ENCODE measurements at regions of chr6 and their contacts with region 1.

Region 1: DNA sequence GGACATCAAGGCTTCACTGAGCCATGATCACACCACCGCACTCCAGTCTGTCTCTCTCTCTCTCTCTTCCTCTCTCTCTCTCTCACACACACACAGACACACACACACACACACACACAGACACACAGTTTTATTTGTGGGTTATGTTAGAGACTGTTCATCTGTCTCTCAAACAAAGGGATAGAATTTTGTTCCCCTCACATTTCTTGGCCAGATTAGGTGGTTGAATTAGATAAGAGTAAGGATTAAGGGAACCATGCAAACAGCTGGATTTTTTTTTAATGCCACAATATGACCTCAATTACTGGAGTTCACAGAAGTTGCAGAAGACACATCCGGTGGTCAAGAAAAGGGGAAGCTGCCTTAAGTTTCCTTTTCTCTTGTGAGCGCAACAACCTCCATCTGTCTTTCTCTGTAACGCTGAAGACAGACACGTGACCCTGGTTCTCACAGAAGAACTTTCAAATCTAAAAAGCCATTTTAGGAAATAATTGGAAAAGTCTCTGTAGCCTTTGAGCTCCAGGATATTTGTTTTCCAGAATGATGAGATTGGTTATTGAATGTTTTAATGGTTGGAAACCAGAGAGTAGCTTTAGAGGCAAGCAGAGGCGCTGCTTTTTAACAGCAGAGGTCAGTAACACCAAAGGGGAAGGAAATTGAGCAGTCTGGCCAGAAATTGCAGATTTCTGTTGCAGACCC is 33.0 kb upstream of the LGSN start:
- DNase-seq: peak; percentile 50 to 62
- H3K4me3 ChIP-seq: no peak overlapping the region
- H3K4me3 Mint-ChIP-seq: no peak overlapping the region
- H3K27ac Mint-ChIP-seq: no peak overlapping the region
- H3K4me1 ChIP-seq: peaks cover 37% of the 10 kb centered on the region
- H3K4me1 Mint-ChIP-seq: peaks cover 32% of the 10 kb centered on the region
- H3K27me3 ChIP-seq: no peaks in the 10 kb centered on the region
- H3K27me3 Mint-ChIP-seq: no peaks in the 10 kb centered on the region
- CTCF ChIP-seq: peak; percentile 44 to 73

Region 2: GRCh38 chr6:63391203-63391970 is 38.7 kb after region 1 on chr6:
- CTCF ChIA-PET with region 1: interaction called, 9 read pairs
- POLR2A ChIA-PET with region 1: interaction called, 3 read pairs
- intact Hi-C with region 1: loop called (anchors 1 kb)
- DNase-seq: peak; percentile 82 to 83
- H3K4me3 ChIP-seq: no peak overlapping the region
- H3K4me3 Mint-ChIP-seq: peak overlapping the region; percentile 67
- H3K27ac Mint-ChIP-seq: peak overlapping the region; percentile 73
- H3K4me1 ChIP-seq: peaks cover 44% of the 10 kb centered on the region
- H3K4me1 Mint-ChIP-seq: peaks cover 31% of the 10 kb centered on the region
- H3K27me3 ChIP-seq: no peaks in the 10 kb centered on the region
- H3K27me3 Mint-ChIP-seq: no peaks in the 10 kb centered on the region
- CTCF ChIP-seq: no peak

Region 3: DNA sequence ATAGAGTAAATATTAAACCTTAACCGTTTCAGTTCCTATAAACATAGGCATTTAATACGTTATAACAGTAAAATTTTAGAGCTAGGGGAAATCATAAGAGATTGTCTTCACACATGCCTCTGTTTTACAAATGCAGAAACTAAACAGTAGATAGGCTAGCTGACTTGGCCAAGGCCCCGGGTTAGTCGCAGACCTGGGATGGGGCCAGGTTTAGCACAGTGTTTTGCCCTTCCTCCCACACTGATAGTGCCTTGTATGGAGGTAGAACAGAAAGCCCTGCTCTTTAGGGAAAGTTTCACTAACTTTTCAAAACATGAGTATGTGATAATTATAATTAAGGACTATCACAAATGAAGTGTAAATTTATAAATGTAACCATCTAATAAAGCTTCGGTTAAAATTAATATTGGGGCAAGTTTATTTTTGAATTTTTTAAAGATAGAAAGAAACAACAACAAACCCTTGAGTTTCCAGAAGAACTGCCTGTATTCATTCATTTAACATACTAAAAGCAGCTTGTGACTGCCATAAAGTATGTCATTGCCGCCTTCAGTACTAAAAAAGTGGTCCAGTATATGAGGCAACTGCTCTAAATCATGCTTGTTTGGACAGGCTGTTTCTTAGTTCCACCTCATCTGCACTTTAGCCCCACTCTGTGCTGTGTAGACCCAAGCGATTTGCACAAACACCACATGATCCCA is 157.1 kb after region 1 on chr6:
- CTCF ChIA-PET with region 1: no interaction called
- POLR2A ChIA-PET with region 1: no interaction called
- intact Hi-C with region 1: loop called (anchors 5 kb)
- DNase-seq: peak; percentile 72 to 78
- H3K4me3 ChIP-seq: no peak overlapping the region
- H3K4me3 Mint-ChIP-seq: no peak overlapping the region
- H3K27ac Mint-ChIP-seq: no peak overlapping the region
- H3K4me1 ChIP-seq: peaks cover 33% of the 10 kb centered on the region
- H3K4me1 Mint-ChIP-seq: peaks cover 6% of the 10 kb centered on the region
- H3K27me3 ChIP-seq: no peaks in the 10 kb centered on the region
- H3K27me3 Mint-ChIP-seq: no peaks in the 10 kb centered on the region
- CTCF ChIP-seq: no peak

Region 4: GRCh38 chr6:63553208-63553607 is 200.5 kb after region 1 on chr6:
- CTCF ChIA-PET with region 1: no interaction called
- POLR2A ChIA-PET with region 1: no interaction called
- intact Hi-C with region 1: no loop called
- DNase-seq: no peak
- H3K4me3 ChIP-seq: no peak overlapping the region
- H3K4me3 Mint-ChIP-seq: no peak overlapping the region
- H3K27ac Mint-ChIP-seq: no peak overlapping the region
- H3K4me1 ChIP-seq: peaks cover 9% of the 10 kb centered on the region; the same call in 1 of the 2 replicates
- H3K4me1 Mint-ChIP-seq: peaks cover 11% of the 10 kb centered on the region
- H3K27me3 ChIP-seq: no peaks in the 10 kb centered on the region
- H3K27me3 Mint-ChIP-seq: no peaks in the 10 kb centered on the region
- CTCF ChIP-seq: no peak

Region 5: GRCh38 chr6:63571881-63572732 is 219.4 kb after region 1 on chr6 and contains the starts of genes LOC128125822 and PTP4A1:
- CTCF ChIA-PET with region 1: interaction called, 7 read pairs
- POLR2A ChIA-PET with region 1: no interaction called
- intact Hi-C with region 1: loop called (anchors 1 kb)
- DNase-seq: peak; percentile 96 to 98
- H3K4me3 ChIP-seq: peak within 1 kb of the TSS; percentile 98
- H3K4me3 Mint-ChIP-seq: peak within 1 kb of the TSS; percentile 88
- H3K27ac Mint-ChIP-seq: peak within 1 kb of the TSS; percentile 94
- H3K4me1 ChIP-seq: peaks cover 29% of the 10 kb centered on the region
- H3K4me1 Mint-ChIP-seq: peaks cover 8% of the 10 kb centered on the region
- H3K27me3 ChIP-seq: no peaks in the 10 kb centered on the region
- H3K27me3 Mint-ChIP-seq: no peaks in the 10 kb centered on the region
- CTCF ChIP-seq: no peak
- total RNA-seq, gene PTP4A1: 122 and 129 TPM in 2 replicates

Region 6: DNA sequence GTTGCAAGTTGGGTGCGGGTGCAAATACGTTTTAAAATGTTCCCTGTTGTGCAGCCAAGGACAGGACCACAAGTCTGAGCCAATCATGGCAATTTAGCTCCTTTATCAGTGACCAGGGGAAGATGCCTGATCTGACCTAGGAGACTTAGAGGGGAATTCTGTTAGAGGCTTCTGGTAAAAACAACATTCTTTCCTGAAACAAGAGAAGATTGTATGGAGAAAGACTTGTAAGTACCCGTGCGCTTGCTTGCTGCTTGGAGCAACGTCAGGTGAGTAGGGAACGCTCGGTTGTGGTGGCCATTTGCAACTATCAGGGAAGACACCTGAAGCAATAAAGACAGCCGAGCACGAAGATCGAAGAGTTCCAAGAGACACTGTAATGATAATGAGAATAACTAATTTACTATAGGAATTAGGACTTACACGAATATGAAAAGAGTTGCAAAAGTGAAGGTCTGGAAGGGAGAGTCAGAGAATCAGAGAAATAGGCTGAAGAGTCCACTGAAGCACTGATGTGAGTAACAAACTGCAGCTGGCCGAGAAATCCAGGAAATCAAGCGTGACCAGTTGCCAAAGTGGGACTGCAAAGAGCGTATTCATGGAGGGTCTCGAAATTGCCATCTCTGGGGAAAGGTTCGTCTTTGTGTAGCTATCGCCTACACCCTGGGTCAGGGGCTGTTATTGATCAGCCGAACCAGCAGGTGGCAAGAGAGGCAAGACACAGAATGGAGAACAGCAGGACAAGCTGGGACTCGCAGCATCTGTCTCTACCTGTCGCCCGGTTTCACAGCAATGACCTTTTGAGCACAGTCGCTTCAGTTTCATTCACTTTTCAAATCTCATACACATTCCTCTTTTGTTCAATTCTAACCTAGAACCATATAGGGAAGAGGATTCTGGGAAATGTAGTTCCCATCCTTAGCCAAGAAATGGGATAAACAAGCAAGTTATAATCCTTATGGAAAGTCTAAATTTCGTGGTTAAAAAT is 245.6 kb after region 1 on chr6:
- CTCF ChIA-PET with region 1: interaction called, 10 read pairs
- POLR2A ChIA-PET with region 1: no interaction called
- intact Hi-C with region 1: loop called (anchors 1 kb)
- DNase-seq: peak; percentile 87 to 88
- H3K4me3 ChIP-seq: peak overlapping the region; percentile 59
- H3K4me3 Mint-ChIP-seq: peak overlapping the region; percentile 99
- H3K27ac Mint-ChIP-seq: peak overlapping the region; percentile 93
- H3K4me1 ChIP-seq: peaks cover 3% of the 10 kb centered on the region; the same call in 1 of the 2 replicates
- H3K4me1 Mint-ChIP-seq: peaks cover 6% of the 10 kb centered on the region
- H3K27me3 ChIP-seq: no peaks in the 10 kb centered on the region
- H3K27me3 Mint-ChIP-seq: no peaks in the 10 kb centered on the region
- CTCF ChIP-seq: peak; percentile 86 to 91

Region 7: DNA sequence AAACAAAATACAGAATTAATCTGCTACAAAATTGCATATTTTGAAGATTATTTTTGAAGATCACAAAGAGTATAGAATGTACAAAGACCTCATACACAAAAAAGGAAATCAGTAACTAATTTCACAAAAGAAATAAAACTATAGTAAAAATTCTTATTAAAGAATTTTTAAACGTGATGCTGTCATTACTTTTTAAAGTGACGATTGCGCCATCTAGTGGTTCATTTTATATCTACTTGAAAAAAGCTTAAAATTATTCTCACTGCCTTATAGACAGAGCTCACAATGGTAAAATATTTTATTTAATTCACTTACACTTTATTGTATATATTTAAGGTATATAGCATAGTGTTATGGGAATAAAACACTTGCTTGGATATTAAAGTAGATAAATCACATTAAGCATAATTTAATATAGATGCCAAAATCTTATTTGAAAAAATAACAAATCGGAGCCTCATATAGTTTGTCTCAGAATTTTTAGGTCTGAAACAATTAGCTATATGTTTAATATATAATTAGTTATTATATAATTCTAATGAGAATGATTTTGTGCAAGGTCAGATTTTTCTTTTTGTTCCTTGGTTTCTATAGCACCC is 411.7 kb after region 1 on chr6:
- CTCF ChIA-PET with region 1: interaction called, 7 read pairs
- POLR2A ChIA-PET with region 1: no interaction called
- intact Hi-C with region 1: loop called (anchors 1 kb)
- DNase-seq: peak in 1 of 2 experiments; percentile 36
- H3K4me3 ChIP-seq: no peak overlapping the region
- H3K4me3 Mint-ChIP-seq: no peak overlapping the region
- H3K27ac Mint-ChIP-seq: no peak overlapping the region
- H3K4me1 ChIP-seq: no peaks in the 10 kb centered on the region
- H3K4me1 Mint-ChIP-seq: no peaks in the 10 kb centered on the region
- H3K27me3 ChIP-seq: no peaks in the 10 kb centered on the region
- H3K27me3 Mint-ChIP-seq: no peaks in the 10 kb centered on the region
- CTCF ChIP-seq: peak; percentile 29 to 44

Region 8: GRCh38 chr6:63802606-63803206 is 450.0 kb after region 1 on chr6:
- CTCF ChIA-PET with region 1: interaction called, 3 read pairs
- POLR2A ChIA-PET with region 1: no interaction called
- intact Hi-C with region 1: loop called (anchors 2 kb)
- DNase-seq: no peak
- H3K4me3 ChIP-seq: no peak overlapping the region
- H3K4me3 Mint-ChIP-seq: no peak overlapping the region
- H3K27ac Mint-ChIP-seq: no peak overlapping the region
- H3K4me1 ChIP-seq: 0 out of 2 replicates have a peak, but pooled peaks cover 4% of the 10 kb centered on the region
- H3K4me1 Mint-ChIP-seq: no peaks in the 10 kb centered on the region
- H3K27me3 ChIP-seq: no peaks in the 10 kb centered on the region
- H3K27me3 Mint-ChIP-seq: no peaks in the 10 kb centered on the region
- CTCF ChIP-seq: peak; percentile 56 to 62

Measured in Caco-2 (cell line).